ENCODE measurements at regions of chr6 and their contacts with region 1.

Region 1: DNA sequence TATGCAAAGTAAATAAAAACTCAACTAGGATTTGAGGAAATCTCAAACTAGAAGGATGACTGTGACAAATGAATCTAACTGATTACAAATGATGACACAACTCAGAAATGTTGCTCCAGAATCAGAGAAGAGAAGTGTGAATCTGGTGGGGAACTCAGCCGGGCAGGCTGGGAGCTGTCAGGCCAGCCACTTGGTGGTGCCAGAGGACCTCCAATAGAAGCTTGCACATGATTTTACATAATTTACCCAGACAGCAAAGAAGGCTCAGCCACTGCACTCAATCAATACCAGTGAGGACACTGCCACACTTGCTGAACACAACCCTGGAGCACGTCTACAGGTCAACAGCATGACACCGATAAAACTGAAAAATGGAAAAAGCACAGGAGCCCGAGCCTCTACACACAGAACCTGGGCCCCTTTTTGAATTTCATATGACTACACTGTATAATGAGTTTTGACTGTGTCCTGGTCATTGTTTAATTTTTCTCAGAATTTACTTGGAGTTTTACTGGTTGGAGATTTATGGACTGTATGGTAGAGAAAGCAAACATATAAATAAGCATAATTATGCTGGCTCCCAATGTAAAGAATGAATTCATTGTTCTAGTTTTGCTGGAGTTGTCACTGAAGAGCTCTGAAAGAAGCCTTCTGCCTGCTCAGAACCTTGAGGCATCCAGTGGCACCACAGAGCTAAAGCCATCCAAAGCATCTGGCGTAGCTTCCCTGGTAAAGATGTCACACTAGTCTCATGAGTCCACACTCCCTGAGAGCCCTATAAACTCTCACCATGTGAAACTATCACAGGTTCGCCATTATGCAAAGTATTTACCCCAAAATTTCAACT is 296.5 kb downstream of the THBS2 start:
- DNase-seq: peak; percentile 62 to 90 (median 81)

Region 2: GRCh38 chr6:169097381-169097959 is 140.4 kb after region 1 on chr6:
- intact Hi-C with region 1: no loop called
- DNase-seq: peak in 1 of 42 donors; percentile 31

Region 3: GRCh38 chr6:169489563-169490245 is 532.6 kb after region 1 on chr6:
- intact Hi-C with region 1: loop called (anchors 5 kb)
- DNase-seq: no peak

Measured in head of caudate nucleus (tissue), 42 donors.